ENCODE measurements at regions of chr5 and their contacts with region 1.

Region 1: DNA sequence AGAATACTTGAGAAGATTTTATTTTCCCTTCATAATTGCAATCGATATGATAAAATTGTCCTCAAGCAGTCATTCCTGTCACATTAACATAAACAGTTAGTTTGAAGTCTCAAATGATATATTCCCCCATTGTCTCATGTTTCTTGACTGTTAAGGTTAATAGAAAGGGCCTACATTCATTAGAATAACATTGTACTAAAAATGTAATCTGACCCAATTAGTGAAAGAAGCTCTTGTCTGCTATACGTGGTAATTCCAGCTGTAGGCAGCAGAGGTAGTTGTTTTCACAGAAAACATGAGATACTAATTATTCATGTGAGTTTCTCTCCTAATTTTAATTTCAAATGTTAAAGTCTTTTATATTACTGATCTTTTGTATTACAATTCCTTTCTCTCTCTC is 25.9 kb upstream of the AP3B1 start:
- DNase-seq: no peak
- ATAC-seq: no peak
- H3K4me3 Mint-ChIP-seq: no peak overlapping the region
- H3K27ac Mint-ChIP-seq: no peak overlapping the region
- H3K4me1 Mint-ChIP-seq: no peaks in the 10 kb centered on the region
- H3K27me3 Mint-ChIP-seq: no peaks in the 10 kb centered on the region
- CTCF ChIP-seq: no peak

Region 2: GRCh38 chr5:78345485-78345884 is 25.1 kb after region 1 on chr5:
- CTCF ChIA-PET with region 1: no interaction called
- POLR2A ChIA-PET with region 1: no interaction called
- intact Hi-C with region 1: loop called (anchors 1 kb)
- DNase-seq: no peak
- ATAC-seq: no peak
- H3K4me3 Mint-ChIP-seq: no peak overlapping the region
- H3K27ac Mint-ChIP-seq: no peak overlapping the region
- H3K4me1 Mint-ChIP-seq: no peaks in the 10 kb centered on the region
- H3K27me3 Mint-ChIP-seq: peaks cover 2% of the 10 kb centered on the region
- CTCF ChIP-seq: no peak